ENCODE measurements at regions of chr17 and their contacts with region 1.

Region 1: GRCh38 chr17:2380226-2380922 is 20.5 kb downstream of the MNT start:
- DNase-seq: no peak
- H3K27ac ChIP-seq: peak overlapping the region; percentile 99
- CTCF ChIP-seq: no peak

Region 2: DNA sequence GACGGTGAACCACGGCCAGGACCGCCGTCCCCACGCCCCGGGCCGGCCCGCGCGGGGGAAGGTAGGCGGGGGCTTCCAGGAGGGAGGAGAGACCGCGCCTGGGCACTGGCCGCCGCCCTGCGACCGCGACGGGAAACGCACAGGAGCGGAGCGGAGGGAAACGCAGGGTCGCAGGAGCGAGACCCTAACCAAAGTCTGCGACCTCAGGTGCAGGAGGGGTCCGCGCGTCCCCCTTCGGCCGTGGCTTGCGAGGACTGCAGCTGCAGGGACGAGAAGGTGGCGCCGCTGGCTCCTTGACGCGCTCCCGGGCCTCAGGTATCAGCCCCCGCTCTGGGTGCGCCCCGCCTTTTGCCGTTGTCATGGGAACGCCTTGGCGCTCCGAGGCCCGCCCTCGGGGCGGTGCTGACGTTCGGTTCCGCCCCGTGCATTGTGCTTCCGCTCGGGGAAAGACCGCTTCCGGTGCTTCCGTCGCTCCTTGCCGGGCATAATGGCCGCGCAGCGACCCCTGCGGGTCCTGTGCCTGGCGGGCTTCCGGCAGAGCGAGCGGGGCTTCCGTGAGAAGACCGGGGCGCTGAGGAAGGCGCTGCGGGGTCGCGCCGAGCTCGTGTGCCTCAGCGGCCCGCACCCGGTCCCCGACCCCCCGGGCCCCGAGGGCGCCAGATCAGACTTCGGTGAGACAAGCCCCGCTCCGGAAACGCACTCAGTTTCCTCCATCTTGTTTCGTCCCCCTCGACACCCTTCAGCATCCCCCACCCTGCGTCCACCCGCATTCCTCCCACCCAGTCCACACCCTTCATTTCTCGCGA is 338.6 kb before region 1 on chr17 and contains the start of gene OVCA2:
- CTCF ChIA-PET with region 1: no interaction called
- POLR2A ChIA-PET with region 1: no interaction called
- DNase-seq: peak; percentile 93
- H3K27ac ChIP-seq: peak within 1 kb of the TSS; percentile 83
- CTCF ChIP-seq: peak; percentile 50

Region 3: GRCh38 chr17:2392252-2393173 is 12.1 kb after region 1 on chr17:
- CTCF ChIA-PET with region 1: interaction called, 21 read pairs
- POLR2A ChIA-PET with region 1: no interaction called
- DNase-seq: peak; percentile 92
- H3K27ac ChIP-seq: peak overlapping the region; percentile 99
- CTCF ChIP-seq: no peak

Region 4: DNA sequence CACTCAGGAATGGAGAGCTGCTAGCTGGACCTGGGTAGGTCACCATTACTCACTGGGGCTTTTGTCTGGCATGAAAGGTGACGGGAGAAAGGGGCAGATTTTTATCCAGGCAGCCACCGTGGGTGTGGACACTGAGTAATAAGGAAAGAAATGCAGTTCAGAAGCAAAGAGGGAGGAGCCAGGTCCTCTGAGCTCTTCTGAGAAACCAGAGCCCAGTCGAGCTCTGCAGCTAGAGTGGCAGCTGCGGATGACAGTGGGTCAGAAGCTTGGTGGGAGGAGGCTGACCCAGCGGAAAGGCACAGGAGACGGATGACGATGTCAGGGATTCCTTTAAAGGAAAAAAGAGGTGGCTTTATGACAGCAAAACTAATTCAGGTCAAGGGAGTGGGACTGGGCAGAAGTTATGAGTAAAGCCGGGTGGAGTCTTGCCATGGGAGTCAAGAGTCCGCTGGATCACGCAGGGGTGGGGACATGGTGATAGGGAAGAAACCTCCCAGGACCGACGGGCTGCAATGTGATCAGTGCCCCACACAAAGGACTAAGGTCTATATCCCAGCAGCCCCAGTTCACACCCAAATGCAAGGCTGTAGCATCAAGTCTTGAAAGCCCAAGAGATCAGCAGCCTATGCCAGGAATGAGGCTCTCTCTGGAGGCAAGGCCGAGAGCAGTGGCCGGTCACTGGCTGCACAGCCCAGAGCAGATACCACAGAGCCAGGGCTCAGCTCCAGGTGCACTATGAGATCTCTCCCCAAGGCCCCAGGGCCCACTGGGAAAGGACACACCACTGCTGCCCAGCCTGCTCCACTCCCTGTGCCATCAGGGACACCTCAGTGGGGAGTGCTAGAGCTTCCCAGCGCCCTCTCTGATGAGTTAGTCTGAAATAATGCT is 26.8 kb after region 1 on chr17:
- CTCF ChIA-PET with region 1: interaction called, 21 read pairs
- POLR2A ChIA-PET with region 1: no interaction called
- DNase-seq: peak; percentile 67
- H3K27ac ChIP-seq: peak overlapping the region; percentile 99
- CTCF ChIP-seq: no peak

Region 5: DNA sequence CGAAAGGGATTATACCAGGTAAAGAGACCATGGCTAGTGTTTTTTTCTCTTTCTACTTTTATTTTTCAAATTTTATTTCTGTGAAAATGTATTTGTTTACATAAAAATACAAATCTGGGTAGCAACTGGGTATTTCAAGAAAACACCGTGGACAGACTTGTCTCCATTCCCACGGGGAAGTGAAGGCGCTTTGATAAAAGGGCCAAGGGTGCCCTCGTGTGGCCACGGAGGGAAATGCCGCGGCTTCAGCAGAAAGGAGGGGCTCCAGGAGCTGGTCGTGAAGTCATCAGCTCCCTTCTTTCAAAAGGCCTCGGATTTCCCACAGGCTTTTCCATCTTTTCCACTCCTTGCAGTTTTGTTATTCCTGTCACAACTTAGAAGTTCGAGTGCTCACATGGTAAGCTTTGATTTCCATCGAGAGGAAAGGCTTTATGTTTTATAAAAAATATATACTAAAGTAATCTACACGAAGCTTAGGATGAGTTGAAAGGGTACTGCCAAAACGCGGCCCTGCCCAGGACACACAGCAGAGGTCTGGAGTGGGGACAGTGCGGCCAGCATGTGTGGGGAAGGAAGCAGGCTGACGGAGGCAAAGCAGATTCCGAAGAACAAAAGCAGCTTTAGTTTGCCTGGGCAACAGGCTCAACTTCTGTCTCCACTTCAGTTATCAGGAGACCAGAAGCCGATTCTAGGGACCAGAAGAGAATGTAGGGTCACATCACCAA is 35.8 kb after region 1 on chr17:
- CTCF ChIA-PET with region 1: interaction called, 54 read pairs
- POLR2A ChIA-PET with region 1: no interaction called
- DNase-seq: peak; percentile 69
- H3K27ac ChIP-seq: peak overlapping the region; percentile 50
- CTCF ChIP-seq: peak; percentile 93

Region 6: GRCh38 chr17:2427215-2427614 is 46.8 kb after region 1 on chr17:
- CTCF ChIA-PET with region 1: no interaction called
- POLR2A ChIA-PET with region 1: no interaction called
- DNase-seq: no peak
- H3K27ac ChIP-seq: peak overlapping the region; percentile 29; the same call in 1 of the 2 replicates
- CTCF ChIP-seq: no peak